Ascending aorta (tissue), 2 donors: ENCODE measurements at regions of chr1 and their contacts with region 1.

Region 1: GRCh38 chr1:91569411-91570119 is 68.9 kb downstream of the CDC7 start:
- DNase-seq: peak; percentile 62 to 93
- H3K4me3 ChIP-seq: no peak overlapping the region
- H3K27ac ChIP-seq: peak overlapping the region; percentile 64 to 76
- H3K4me1 ChIP-seq: peaks cover 0 to 10% of the 10 kb centered on the region in 2 donors
- H3K27me3 ChIP-seq: no peaks in the 10 kb centered on the region
- CTCF ChIP-seq: no peak

Region 2: GRCh38 chr1:91553200-91553621 is 16.4 kb before region 1 on chr1:
- intact Hi-C with region 1: loop called (anchors 1 kb)
- DNase-seq: peak in 1 of 2 donors; percentile 79
- H3K4me3 ChIP-seq: no peak overlapping the region
- H3K27ac ChIP-seq: peak overlapping the region; percentile 59 to 63
- H3K4me1 ChIP-seq: peaks cover 3 to 9% of the 10 kb centered on the region in 2 donors
- H3K27me3 ChIP-seq: no peaks in the 10 kb centered on the region
- CTCF ChIP-seq: no peak

Region 3: GRCh38 chr1:91697416-91697815 is 127.9 kb after region 1 on chr1:
- intact Hi-C with region 1: loop called (anchors 5 kb)
- DNase-seq: no peak
- H3K4me3 ChIP-seq: no peak overlapping the region
- H3K27ac ChIP-seq: peak overlapping the region in 1 of 2 donors; percentile 30
- H3K4me1 ChIP-seq: peaks cover 0 to 27% of the 10 kb centered on the region in 2 donors
- H3K27me3 ChIP-seq: no peaks in the 10 kb centered on the region
- CTCF ChIP-seq: no peak

Region 4: DNA sequence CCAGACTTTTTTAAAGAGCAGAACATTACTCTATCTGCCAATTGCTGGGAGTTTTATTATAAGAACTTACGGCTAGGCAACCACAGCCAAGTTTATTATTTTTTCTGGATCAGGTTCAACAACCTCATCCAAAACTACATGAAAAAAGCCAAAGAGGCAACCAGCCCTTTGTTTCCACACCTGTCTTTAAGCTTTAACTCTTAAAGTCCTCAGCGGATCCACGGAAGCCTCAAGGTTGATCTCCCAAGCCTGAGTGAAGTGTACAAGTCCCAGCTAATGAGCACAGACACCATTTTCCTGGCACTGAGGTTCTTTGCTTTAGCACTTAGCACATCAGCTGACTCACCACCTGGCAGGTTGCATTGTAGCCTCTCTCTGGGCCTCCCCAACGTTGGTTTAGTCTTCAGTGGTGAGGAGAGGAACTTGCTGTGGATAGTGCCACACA is 173.3 kb after region 1 on chr1:
- intact Hi-C with region 1: loop called (anchors 5 kb)
- DNase-seq: peak; percentile 37 to 88
- H3K4me3 ChIP-seq: no peak overlapping the region
- H3K27ac ChIP-seq: peak overlapping the region; percentile 44 to 60
- H3K4me1 ChIP-seq: peaks cover 3 to 34% of the 10 kb centered on the region in 2 donors
- H3K27me3 ChIP-seq: no peaks in the 10 kb centered on the region
- CTCF ChIP-seq: no peak

Region 5: GRCh38 chr1:91791103-91791502 is 221.5 kb after region 1 on chr1:
- intact Hi-C with region 1: no loop called
- DNase-seq: peak in 1 of 2 donors; percentile 40
- H3K4me3 ChIP-seq: no peak overlapping the region
- H3K27ac ChIP-seq: no peak overlapping the region
- H3K4me1 ChIP-seq: peaks cover 0 to 2% of the 10 kb centered on the region in 2 donors
- H3K27me3 ChIP-seq: no peaks in the 10 kb centered on the region
- CTCF ChIP-seq: no peak

Region 6: GRCh38 chr1:91851130-91852010 is 281.8 kb after region 1 on chr1:
- intact Hi-C with region 1: no loop called
- DNase-seq: peak; percentile 28 to 94
- H3K4me3 ChIP-seq: peak overlapping the region; percentile 20 to 54
- H3K27ac ChIP-seq: peak overlapping the region; percentile 65 to 79
- H3K4me1 ChIP-seq: peaks cover 0 to 18% of the 10 kb centered on the region in 2 donors
- H3K27me3 ChIP-seq: no peaks in the 10 kb centered on the region
- CTCF ChIP-seq: no peak